Breast epithelium (tissue), 4 donors: ENCODE measurements at regions of chr6 and their contacts with region 1.

Region 1: GRCh38 chr6:102655823-102656222 is 1262.3 kb downstream of the GRIK2 start:
- DNase-seq: no peak
- H3K4me3 ChIP-seq: no peak overlapping the region
- H3K27ac ChIP-seq: no peak overlapping the region
- H3K4me1 ChIP-seq: no peaks in the 10 kb centered on the region
- H3K27me3 ChIP-seq: no peaks in the 10 kb centered on the region
- CTCF ChIP-seq: no peak
- POLR2A ChIP-seq: no peak

Region 2: GRCh38 chr6:102670735-102671134 is 14.9 kb after region 1 on chr6:
- intact Hi-C with region 1: no loop called
- DNase-seq: no peak
- H3K4me3 ChIP-seq: no peak overlapping the region
- H3K27ac ChIP-seq: no peak overlapping the region
- H3K4me1 ChIP-seq: no peaks in the 10 kb centered on the region
- H3K27me3 ChIP-seq: no peaks in the 10 kb centered on the region
- CTCF ChIP-seq: no peak
- POLR2A ChIP-seq: no peak

Region 3: DNA sequence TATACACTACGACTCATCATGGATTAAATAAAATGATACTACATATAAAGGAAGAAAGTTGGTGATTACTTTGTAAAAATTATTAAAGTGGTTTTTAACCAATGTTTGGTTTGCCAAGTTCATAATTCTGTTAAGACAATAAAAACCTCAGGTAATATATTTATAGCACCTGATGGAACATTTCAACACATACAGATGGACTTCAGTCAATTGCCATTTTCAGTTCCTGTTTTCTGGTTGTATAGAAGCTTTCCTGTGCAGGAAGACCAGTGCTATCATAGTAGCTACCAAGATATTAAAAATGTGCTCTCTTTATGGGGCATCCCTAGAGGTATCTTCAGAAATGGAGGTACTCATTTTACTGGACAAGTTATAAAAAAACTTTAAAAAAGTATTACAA is 424.0 kb after region 1 on chr6:
- intact Hi-C with region 1: loop called (anchors 5 kb)
- DNase-seq: no peak
- H3K4me3 ChIP-seq: no peak overlapping the region
- H3K27ac ChIP-seq: no peak overlapping the region
- H3K4me1 ChIP-seq: no peaks in the 10 kb centered on the region
- H3K27me3 ChIP-seq: no peaks in the 10 kb centered on the region
- CTCF ChIP-seq: no peak
- POLR2A ChIP-seq: no peak